ENCODE measurements at regions of chr4 and their contacts with region 1.

Region 1: DNA sequence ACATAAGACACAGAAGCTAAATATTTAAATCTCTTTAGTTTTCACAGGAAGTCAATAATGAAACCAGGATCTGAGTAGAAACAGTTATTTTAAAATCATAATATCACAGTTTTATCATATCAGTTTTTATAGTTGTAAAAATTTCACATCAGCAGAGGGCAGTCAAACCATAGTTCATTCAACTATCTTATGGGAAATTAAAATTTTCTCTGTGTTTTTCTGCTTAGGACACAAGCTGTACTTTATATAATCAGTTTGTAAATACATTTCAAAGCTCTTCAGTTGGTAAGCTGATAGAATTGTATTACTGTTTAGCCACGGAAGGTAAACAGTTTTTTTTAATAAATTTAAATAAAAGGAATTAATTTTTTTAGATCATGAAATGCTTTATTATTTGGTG is 204.8 kb upstream of the NUDT6 start:
- DNase-seq: no peak
- H3K4me3 ChIP-seq: no peak overlapping the region
- H3K27ac ChIP-seq: no peak overlapping the region
- H3K27me3 ChIP-seq: no peaks in the 10 kb centered on the region
- CTCF ChIP-seq: peak; percentile 32

Region 2: GRCh38 chr4:123014038-123014437 is 113.2 kb before region 1 on chr4:
- CTCF ChIA-PET with region 1: no interaction called
- POLR2A ChIA-PET with region 1: no interaction called
- DNase-seq: no peak
- H3K4me3 ChIP-seq: no peak overlapping the region
- H3K27ac ChIP-seq: no peak overlapping the region
- H3K27me3 ChIP-seq: no peaks in the 10 kb centered on the region
- CTCF ChIP-seq: no peak

Region 3: GRCh38 chr4:123390846-123391456 is 263.7 kb after region 1 on chr4:
- CTCF ChIA-PET with region 1: interaction called, 12 read pairs
- POLR2A ChIA-PET with region 1: no interaction called
- DNase-seq: no peak
- H3K4me3 ChIP-seq: no peak overlapping the region
- H3K27ac ChIP-seq: no peak overlapping the region
- H3K27me3 ChIP-seq: no peaks in the 10 kb centered on the region
- CTCF ChIP-seq: peak; percentile 56